ENCODE measurements at regions of chr15 and their contacts with region 1.

Region 1: GRCh38 chr15:77659350-77660321 is 26.9 kb upstream of the LINGO1 start:
- DNase-seq: no peak
- ATAC-seq: peak; percentile 93
- H3K4me3 ChIP-seq: no peak overlapping the region
- H3K27ac ChIP-seq: no peak overlapping the region
- H3K4me1 ChIP-seq: no peaks in the 10 kb centered on the region
- H3K27me3 ChIP-seq: peaks cover 2 to 3% of the 10 kb centered on the region in 2 experiments; a peak in 2 of 4 replicates
- CTCF ChIP-seq: peak; percentile 32 to 59 (median 50); a peak in 4 of 6 replicates
- EP300 ChIP-seq: no peak
- POLR2A ChIP-seq: no peak
- RAD21 ChIP-seq: peak; percentile 30; the same call in 1 of the 2 replicates

Region 2: GRCh38 chr15:77709135-77709886 is 49.7 kb after region 1 on chr15:
- CTCF ChIA-PET with region 1: no interaction called
- POLR2A ChIA-PET with region 1: no interaction called
- RAD21 ChIA-PET with region 1: no interaction called
- SMC1A ChIA-PET with region 1: no interaction called
- in situ Hi-C with region 1: loop called (anchors 5 kb)
- intact Hi-C with region 1: no loop called
- DNase-seq: no peak
- ATAC-seq: no peak
- H3K4me3 ChIP-seq: no peak overlapping the region
- H3K27ac ChIP-seq: no peak overlapping the region
- H3K4me1 ChIP-seq: no peaks in the 10 kb centered on the region
- H3K27me3 ChIP-seq: peaks cover 2% of the 10 kb centered on the region in 2 experiments; a peak in 3 of 4 replicates
- CTCF ChIP-seq: no peak
- EP300 ChIP-seq: no peak
- POLR2A ChIP-seq: no peak
- RAD21 ChIP-seq: no peak